ENCODE measurements at regions of chr9 and their contacts with region 1.

Region 1: DNA sequence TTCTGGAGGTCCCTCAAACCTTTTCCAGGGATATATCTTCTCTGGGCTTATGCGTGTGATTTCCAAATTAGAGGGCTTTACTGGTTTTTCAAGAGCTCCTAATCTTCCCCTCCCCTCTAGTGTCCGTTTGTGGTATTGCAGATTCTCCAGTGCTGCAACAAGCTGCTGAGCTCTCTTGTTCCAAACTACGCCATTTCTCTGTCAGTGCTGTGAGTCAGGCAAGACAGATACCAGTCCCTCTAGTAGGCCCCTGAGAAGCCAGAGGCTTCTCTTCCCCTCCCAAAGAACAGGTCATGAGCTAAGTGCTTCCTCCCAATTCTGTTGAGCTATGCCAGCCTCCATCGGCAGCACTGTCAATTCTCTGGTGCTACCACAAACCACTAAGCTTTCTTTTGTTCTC is 149.5 kb downstream of the FANCC start:
- DNase-seq: peak; percentile 73 to 87
- H3K4me3 ChIP-seq: no peak overlapping the region
- H3K27ac ChIP-seq: no peak overlapping the region
- H3K4me1 ChIP-seq: peaks cover 0 to 7% (median 0%) of the 10 kb centered on the region in 4 experiments; a peak in 1 of 7 replicates
- H3K27me3 ChIP-seq: no peaks in the 10 kb centered on the region
- CTCF ChIP-seq: peak in 2 of 3 experiments; percentile 75 to 87; a peak in 3 of 4 replicates
- EP300 ChIP-seq: no peak
- POLR2A ChIP-seq: no peak
- RAD21 ChIP-seq: peak; percentile 76 to 86

Region 2: GRCh38 chr9:94952565-94953373 is 215.2 kb before region 1 on chr9:
- CTCF ChIA-PET with region 1: no interaction called
- POLR2A ChIA-PET with region 1: no interaction called
- DNase-seq: no peak
- H3K4me3 ChIP-seq: no peak overlapping the region
- H3K27ac ChIP-seq: no peak overlapping the region
- H3K4me1 ChIP-seq: peaks cover 13 to 35% (median 20%) of the 10 kb centered on the region in 4 experiments
- H3K27me3 ChIP-seq: no peaks in the 10 kb centered on the region
- CTCF ChIP-seq: no peak
- EP300 ChIP-seq: no peak
- POLR2A ChIP-seq: no peak
- RAD21 ChIP-seq: no peak

Region 3: GRCh38 chr9:95138474-95138873 is 29.5 kb before region 1 on chr9:
- CTCF ChIA-PET with region 1: interaction called, 62 read pairs
- POLR2A ChIA-PET with region 1: no interaction called
- DNase-seq: no peak
- H3K4me3 ChIP-seq: no peak overlapping the region
- H3K27ac ChIP-seq: no peak overlapping the region
- H3K4me1 ChIP-seq: no peaks in the 10 kb centered on the region; a peak in 1 of 7 replicates
- H3K27me3 ChIP-seq: no peaks in the 10 kb centered on the region
- CTCF ChIP-seq: peak; percentile 7 to 46 (median 42); a peak in 3 of 4 replicates
- EP300 ChIP-seq: no peak
- POLR2A ChIP-seq: no peak
- RAD21 ChIP-seq: peak in 1 of 2 experiments; percentile 9; a peak in 1 of 4 replicates

Region 4: GRCh38 chr9:95143591-95144561 is 24.1 kb before region 1 on chr9:
- CTCF ChIA-PET with region 1: interaction called, 22 read pairs
- POLR2A ChIA-PET with region 1: no interaction called
- DNase-seq: no peak
- H3K4me3 ChIP-seq: no peak overlapping the region
- H3K27ac ChIP-seq: no peak overlapping the region
- H3K4me1 ChIP-seq: no peaks in the 10 kb centered on the region
- H3K27me3 ChIP-seq: no peaks in the 10 kb centered on the region
- CTCF ChIP-seq: no peak
- EP300 ChIP-seq: no peak
- POLR2A ChIP-seq: no peak
- RAD21 ChIP-seq: no peak

Region 5: GRCh38 chr9:95157481-95158151 is 10.4 kb before region 1 on chr9:
- CTCF ChIA-PET with region 1: interaction called, 23 read pairs
- POLR2A ChIA-PET with region 1: interaction called, 5 read pairs
- DNase-seq: no peak
- H3K4me3 ChIP-seq: no peak overlapping the region
- H3K27ac ChIP-seq: no peak overlapping the region
- H3K4me1 ChIP-seq: no peaks in the 10 kb centered on the region
- H3K27me3 ChIP-seq: no peaks in the 10 kb centered on the region
- CTCF ChIP-seq: no peak
- EP300 ChIP-seq: no peak
- POLR2A ChIP-seq: no peak
- RAD21 ChIP-seq: no peak

Region 6: GRCh38 chr9:95181226-95181818 is 13.3 kb after region 1 on chr9:
- CTCF ChIA-PET with region 1: interaction called, 40 read pairs
- POLR2A ChIA-PET with region 1: no interaction called
- DNase-seq: no peak
- H3K4me3 ChIP-seq: no peak overlapping the region
- H3K27ac ChIP-seq: no peak overlapping the region
- H3K4me1 ChIP-seq: peaks cover 4 to 7% (median 5%) of the 10 kb centered on the region in 4 experiments; a peak in 5 of 7 replicates
- H3K27me3 ChIP-seq: no peaks in the 10 kb centered on the region
- CTCF ChIP-seq: peak in 1 of 3 experiments; percentile 16; a peak in 1 of 4 replicates
- EP300 ChIP-seq: no peak
- POLR2A ChIP-seq: no peak
- RAD21 ChIP-seq: no peak